GM10248 (cell line): ENCODE measurements at regions of chr2 and their contacts with region 1.

Region 1: DNA sequence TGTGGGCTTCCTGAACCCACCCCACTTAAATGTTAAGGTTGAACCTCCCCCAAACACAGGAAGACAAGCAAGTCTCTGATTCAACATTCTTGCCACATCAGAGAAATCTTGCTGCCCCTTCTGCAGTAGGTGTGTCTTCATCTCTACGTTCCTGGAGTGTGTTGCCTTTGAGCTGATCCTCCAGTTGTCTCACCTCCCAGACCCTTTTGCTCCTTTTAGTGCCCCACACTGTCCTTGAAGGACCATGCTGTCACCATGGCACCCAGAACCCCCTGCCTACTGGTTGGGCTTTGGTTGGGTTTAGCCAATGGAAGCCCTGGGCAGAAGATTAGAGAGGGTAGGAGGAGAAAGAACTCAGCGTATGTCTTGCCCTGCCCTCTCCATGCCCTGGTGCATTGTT is 10.7 kb downstream of the CAB39 start:
- DNase-seq: no peak
- CTCF ChIP-seq: no peak

Region 2: DNA sequence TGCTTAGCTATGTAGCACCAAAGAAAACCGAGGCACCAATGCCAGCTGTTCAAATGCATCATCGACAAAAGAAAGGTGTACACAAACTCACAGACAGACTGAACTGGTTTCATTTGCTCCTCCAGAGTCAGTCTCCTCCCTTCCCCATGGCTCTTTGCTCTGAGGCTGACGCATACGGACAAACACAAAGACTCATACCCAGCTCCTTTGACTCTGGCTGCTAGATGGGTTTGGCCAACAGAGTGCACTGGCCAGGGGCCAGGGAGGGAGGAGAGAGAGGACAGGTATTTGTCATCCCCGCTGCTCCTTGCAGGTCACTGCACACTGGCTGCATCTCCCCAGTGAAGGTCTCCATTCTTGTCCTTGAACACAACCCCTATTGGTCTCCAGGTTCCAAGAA is 1049.7 kb before region 1 on chr2:
- CTCF ChIA-PET with region 1: no interaction called
- POLR2A ChIA-PET with region 1: no interaction called
- DNase-seq: no peak
- CTCF ChIP-seq: no peak

Region 3: GRCh38 chr2:230712443-230713330 is 10.7 kb before region 1 on chr2 and contains the start of gene CAB39:
- CTCF ChIA-PET with region 1: interaction called, 14 read pairs
- POLR2A ChIA-PET with region 1: no interaction called
- DNase-seq: peak; percentile 95
- CTCF ChIP-seq: peak; percentile 95

Region 4: DNA sequence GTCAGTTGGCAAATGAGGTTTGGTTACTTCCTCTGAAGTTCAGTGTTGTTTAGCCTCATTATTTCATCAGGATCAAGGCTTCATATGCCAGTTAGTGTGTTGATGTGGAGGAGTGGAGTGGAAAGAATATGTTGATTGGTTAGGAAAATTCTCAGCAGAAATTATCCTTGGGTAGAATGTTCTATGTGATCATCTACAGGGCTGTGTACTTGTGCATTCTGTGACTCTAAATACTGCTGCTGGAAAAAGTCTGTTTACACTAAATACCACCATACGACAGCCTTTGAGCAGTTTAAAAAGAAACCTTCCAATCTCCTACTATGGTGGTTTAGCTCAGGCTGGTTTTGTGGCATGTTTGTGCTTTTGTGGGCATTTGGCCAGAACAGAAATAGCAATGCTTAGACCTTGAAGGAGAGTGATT is 15.0 kb after region 1 on chr2:
- CTCF ChIA-PET with region 1: interaction called, 13 read pairs
- POLR2A ChIA-PET with region 1: no interaction called
- DNase-seq: no peak
- CTCF ChIP-seq: no peak